Keratinocyte (primary cell): ENCODE measurements at regions of chr12 and their contacts with region 1.

Region 1: DNA sequence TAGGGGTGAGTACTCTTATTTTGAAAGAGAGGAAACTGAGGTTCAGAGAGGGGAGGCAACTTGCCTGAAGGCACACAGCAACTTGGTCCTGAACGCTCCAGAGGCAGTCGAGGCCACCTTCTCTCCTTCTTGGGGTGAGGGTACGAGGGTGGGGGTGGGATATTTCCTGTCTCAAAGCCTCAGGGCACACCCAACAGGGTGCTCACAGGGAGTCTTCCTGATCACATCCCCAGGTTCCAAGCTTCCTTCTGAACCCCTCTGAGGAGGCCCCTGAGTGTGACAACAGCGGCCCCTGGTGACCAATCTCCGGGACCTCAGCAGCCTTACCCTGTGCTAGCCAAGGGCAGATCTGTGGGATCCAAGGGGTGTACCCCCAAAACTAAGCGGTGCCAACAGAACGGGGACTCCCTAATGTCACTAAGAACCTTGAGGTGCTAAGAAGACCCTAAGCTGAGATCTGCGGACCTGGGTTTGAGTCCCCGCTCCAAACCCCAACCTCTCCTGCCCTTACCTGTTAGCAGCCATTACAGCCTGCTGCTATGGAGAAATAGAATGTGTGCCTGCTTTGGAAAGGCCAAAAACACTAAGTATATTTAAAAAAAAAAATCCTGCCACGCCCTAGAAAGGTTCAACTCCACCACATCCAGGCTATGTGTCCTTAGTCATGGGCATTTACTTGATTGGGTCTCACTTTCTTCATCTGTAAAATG is 57.9 kb downstream of the TRPV4 start:
- DNase-seq: no peak
- H3K4me3 ChIP-seq: no peak overlapping the region
- H3K27ac ChIP-seq: no peak overlapping the region
- H3K4me1 ChIP-seq: peaks cover 19% of the 10 kb centered on the region
- H3K27me3 ChIP-seq: no peaks in the 10 kb centered on the region
- CTCF ChIP-seq: peak; percentile 89 to 94 (median 93)

Region 2: GRCh38 chr12:109544955-109545531 is 230.3 kb before region 1 on chr12:
- dilution Hi-C with region 1: loop called (anchors 25 kb)
- DNase-seq: no peak
- H3K4me3 ChIP-seq: no peak overlapping the region
- H3K27ac ChIP-seq: no peak overlapping the region
- H3K4me1 ChIP-seq: peaks cover 23% of the 10 kb centered on the region
- H3K27me3 ChIP-seq: peaks cover 24% of the 10 kb centered on the region
- CTCF ChIP-seq: no peak

Region 3: DNA sequence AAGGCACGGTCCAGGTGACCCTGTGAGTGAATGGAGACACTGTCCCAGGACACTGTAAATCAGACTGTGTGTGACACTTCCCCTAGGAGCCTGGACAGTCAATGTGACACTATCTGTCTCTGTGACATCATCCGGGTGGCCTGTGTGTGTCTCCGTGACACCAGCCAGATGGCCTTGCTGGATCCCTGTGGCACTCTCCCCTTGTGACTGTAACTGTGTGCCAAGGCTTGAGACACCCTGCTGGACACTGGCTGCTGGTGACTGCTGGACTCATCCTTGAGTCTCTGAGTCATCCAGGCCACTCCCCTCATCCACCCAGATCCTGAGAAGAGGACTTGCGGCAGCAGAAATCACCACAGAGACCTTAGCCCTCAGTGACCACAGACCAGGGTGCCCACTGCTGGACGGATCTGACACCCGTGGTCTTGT is 150.2 kb before region 1 on chr12:
- dilution Hi-C with region 1: loop called (anchors 25 kb)
- DNase-seq: no peak
- H3K4me3 ChIP-seq: no peak overlapping the region
- H3K27ac ChIP-seq: no peak overlapping the region
- H3K4me1 ChIP-seq: no peaks in the 10 kb centered on the region
- H3K27me3 ChIP-seq: peaks cover 21% of the 10 kb centered on the region
- CTCF ChIP-seq: no peak

Region 4: GRCh38 chr12:109811624-109811995 is 36.3 kb after region 1 on chr12:
- dilution Hi-C with region 1: no loop called
- DNase-seq: no peak
- H3K4me3 ChIP-seq: no peak overlapping the region
- H3K27ac ChIP-seq: no peak overlapping the region
- H3K4me1 ChIP-seq: no peaks in the 10 kb centered on the region
- H3K27me3 ChIP-seq: no peaks in the 10 kb centered on the region
- CTCF ChIP-seq: peak in 1 of 3 experiments; percentile 3

Region 5: DNA sequence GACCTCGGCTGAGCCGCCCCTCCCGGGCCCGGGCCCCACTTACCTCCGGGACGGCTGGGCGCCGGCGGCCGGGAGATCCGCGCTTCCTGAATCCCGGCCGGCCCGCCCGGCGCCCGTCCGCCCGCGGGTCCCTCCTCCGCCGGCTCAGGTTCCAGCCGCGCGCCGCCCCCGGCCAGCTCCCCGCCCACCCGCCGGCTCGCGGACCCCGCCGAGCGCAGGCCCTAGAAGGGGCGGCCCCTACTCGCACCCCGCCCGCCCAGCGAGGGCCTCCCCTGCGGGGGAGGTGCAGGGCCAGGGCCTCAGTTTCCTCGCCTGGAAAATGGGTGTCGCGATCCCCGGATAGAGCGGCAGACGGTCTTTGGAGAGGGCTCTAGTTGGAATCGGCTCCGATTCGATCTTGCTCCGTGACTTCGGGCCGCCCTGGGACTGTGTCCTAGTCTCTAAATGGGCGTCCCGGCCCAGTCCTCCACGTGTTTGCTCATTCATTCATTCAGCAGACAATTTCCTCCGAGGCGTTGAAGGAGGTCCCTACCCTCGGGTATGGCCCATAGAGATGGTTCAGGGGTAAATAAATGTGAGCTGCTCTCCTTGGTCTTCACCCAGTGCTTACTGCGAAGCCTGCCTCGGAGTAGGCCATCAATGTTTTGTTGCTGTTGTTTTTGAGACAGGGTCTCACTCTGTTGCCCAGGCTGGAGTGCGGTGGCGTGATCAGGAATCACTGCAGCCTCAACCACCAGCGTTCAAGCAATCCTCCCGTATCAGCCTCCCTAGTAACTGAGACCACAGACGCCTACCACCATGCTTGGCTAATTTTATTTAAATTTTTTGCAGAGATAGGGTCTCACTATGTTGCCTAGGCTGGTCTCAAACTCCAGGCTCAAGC is 58.2 kb after region 1 on chr12 and contains the start of gene TRPV4:
- dilution Hi-C with region 1: no loop called
- DNase-seq: no peak
- H3K4me3 ChIP-seq: peak within 1 kb of the TSS; percentile 27 to 57 (median 31)
- H3K27ac ChIP-seq: no peak within 1 kb of the TSS
- H3K4me1 ChIP-seq: peaks cover 10% of the 10 kb centered on the region
- H3K27me3 ChIP-seq: peaks cover 12% of the 10 kb centered on the region
- CTCF ChIP-seq: no peak
- polyA plus RNA-seq, gene TRPV4: 0.46 to 0.76 TPM (median 0.70 TPM) in 3 replicates

Region 6: GRCh38 chr12:109844983-109845823 is 69.9 kb after region 1 on chr12:
- dilution Hi-C with region 1: no loop called
- DNase-seq: no peak
- H3K4me3 ChIP-seq: peak overlapping the region in 1 of 3 experiments; percentile 54
- H3K27ac ChIP-seq: no peak overlapping the region
- H3K4me1 ChIP-seq: peaks cover 2% of the 10 kb centered on the region
- H3K27me3 ChIP-seq: no peaks in the 10 kb centered on the region
- CTCF ChIP-seq: peak; percentile 85 to 99 (median 92)

Region 7: GRCh38 chr12:109863847-109864712 is 88.8 kb after region 1 on chr12:
- dilution Hi-C with region 1: no loop called
- DNase-seq: no peak
- H3K4me3 ChIP-seq: no peak overlapping the region
- H3K27ac ChIP-seq: peak overlapping the region; percentile 45
- H3K4me1 ChIP-seq: peaks cover 31% of the 10 kb centered on the region
- H3K27me3 ChIP-seq: no peaks in the 10 kb centered on the region
- CTCF ChIP-seq: no peak